ENCODE measurements at regions of chr17 and their contacts with region 1.

Region 1: GRCh38 chr17:59753522-59754467 is 46.3 kb downstream of the VMP1 start:
- DNase-seq: peak; percentile 85
- H3K4me3 Mint-ChIP-seq: peak overlapping the region; percentile 71
- H3K27ac Mint-ChIP-seq: peak overlapping the region; percentile 85
- H3K4me1 Mint-ChIP-seq: peaks cover 58% of the 10 kb centered on the region
- H3K27me3 Mint-ChIP-seq: no peaks in the 10 kb centered on the region

Region 2: DNA sequence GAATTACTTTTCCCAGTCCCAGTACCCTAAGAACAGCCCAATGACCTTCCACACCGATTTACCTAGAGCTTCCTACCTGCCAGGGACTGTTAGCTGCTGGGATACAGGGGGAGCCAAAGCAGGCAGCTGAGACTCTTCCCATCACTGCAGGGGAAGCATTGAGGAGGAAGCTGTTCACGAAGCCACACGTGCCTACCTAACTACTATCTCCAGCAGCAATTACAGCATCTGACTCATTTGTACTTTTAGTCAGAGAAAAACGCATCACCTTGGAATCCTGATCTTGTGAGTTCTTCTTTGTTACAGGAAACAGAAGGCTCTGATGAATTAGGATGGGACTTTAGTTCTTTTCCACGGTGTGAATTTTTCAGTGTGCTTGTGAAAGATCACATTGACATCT is 302.1 kb before region 1 on chr17:
- intact Hi-C with region 1: no loop called
- DNase-seq: no peak
- H3K4me3 Mint-ChIP-seq: no peak overlapping the region
- H3K27ac Mint-ChIP-seq: no peak overlapping the region
- H3K4me1 Mint-ChIP-seq: peaks cover 3% of the 10 kb centered on the region
- H3K27me3 Mint-ChIP-seq: peaks cover 3% of the 10 kb centered on the region

Region 3: DNA sequence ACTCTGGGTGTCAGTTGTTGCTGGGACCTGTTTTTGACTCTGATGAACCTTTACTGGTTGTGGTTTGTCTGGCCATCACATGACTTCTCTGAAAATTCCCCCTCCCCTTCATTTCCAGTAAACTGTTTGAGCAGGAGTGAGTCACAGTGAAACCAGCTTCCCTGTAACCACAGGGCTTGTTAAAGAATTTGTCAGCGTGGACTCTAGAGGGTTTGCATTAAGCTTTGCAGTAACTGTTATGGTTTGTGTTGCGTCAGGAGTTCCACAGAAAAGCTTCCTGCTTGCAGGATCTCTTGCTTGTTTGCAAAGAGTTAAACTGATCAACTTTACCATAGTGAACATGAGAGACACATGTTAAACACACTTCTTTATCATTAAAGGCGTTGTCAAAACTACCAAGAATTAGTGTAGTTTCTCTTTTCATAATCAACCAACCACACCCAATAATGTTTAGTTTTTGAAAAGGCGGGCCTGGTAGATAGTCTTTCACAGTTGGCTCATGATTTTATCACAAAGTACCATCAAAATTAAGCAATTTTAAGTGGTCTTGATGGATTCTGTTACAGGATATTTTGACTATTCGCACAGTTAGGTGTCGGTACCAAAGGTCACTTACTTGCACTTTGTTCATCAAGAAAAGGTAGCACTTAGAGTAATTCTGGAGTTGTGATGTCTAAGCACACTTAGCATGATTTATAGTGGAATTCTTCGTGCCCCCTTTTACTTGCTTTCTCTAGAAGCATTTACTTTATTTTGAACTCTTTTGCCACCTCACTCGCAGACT is 32.9 kb after region 1 on chr17:
- intact Hi-C with region 1: loop called (anchors 1 kb)
- DNase-seq: peak; percentile 96
- H3K4me3 Mint-ChIP-seq: peak overlapping the region; percentile 83
- H3K27ac Mint-ChIP-seq: peak overlapping the region; percentile 100
- H3K4me1 Mint-ChIP-seq: peaks cover 56% of the 10 kb centered on the region
- H3K27me3 Mint-ChIP-seq: no peaks in the 10 kb centered on the region

Region 4: GRCh38 chr17:59815965-59816364 is 62.2 kb after region 1 on chr17:
- intact Hi-C with region 1: no loop called
- DNase-seq: peak; percentile 12
- H3K4me3 Mint-ChIP-seq: no peak overlapping the region
- H3K27ac Mint-ChIP-seq: no peak overlapping the region
- H3K4me1 Mint-ChIP-seq: peaks cover 31% of the 10 kb centered on the region
- H3K27me3 Mint-ChIP-seq: no peaks in the 10 kb centered on the region

Region 5: GRCh38 chr17:59829217-59830006 is 75.6 kb after region 1 on chr17:
- intact Hi-C with region 1: loop called (anchors 1 kb)
- DNase-seq: peak; percentile 89
- H3K4me3 Mint-ChIP-seq: peak overlapping the region; percentile 86
- H3K27ac Mint-ChIP-seq: peak overlapping the region; percentile 97
- H3K4me1 Mint-ChIP-seq: peaks cover 72% of the 10 kb centered on the region
- H3K27me3 Mint-ChIP-seq: no peaks in the 10 kb centered on the region

Region 6: GRCh38 chr17:59837308-59838051 is 83.7 kb after region 1 on chr17:
- intact Hi-C with region 1: loop called (anchors 2 kb)
- DNase-seq: peak; percentile 94
- H3K4me3 Mint-ChIP-seq: peak overlapping the region; percentile 98
- H3K27ac Mint-ChIP-seq: peak overlapping the region; percentile 99
- H3K4me1 Mint-ChIP-seq: peaks cover 32% of the 10 kb centered on the region
- H3K27me3 Mint-ChIP-seq: peaks cover 2% of the 10 kb centered on the region

Region 7: GRCh38 chr17:59846394-59847165 is 92.8 kb after region 1 on chr17:
- intact Hi-C with region 1: loop called (anchors 1 kb)
- DNase-seq: peak; percentile 86
- H3K4me3 Mint-ChIP-seq: peak overlapping the region; percentile 47
- H3K27ac Mint-ChIP-seq: peak overlapping the region; percentile 92
- H3K4me1 Mint-ChIP-seq: peaks cover 53% of the 10 kb centered on the region
- H3K27me3 Mint-ChIP-seq: no peaks in the 10 kb centered on the region

Region 8: DNA sequence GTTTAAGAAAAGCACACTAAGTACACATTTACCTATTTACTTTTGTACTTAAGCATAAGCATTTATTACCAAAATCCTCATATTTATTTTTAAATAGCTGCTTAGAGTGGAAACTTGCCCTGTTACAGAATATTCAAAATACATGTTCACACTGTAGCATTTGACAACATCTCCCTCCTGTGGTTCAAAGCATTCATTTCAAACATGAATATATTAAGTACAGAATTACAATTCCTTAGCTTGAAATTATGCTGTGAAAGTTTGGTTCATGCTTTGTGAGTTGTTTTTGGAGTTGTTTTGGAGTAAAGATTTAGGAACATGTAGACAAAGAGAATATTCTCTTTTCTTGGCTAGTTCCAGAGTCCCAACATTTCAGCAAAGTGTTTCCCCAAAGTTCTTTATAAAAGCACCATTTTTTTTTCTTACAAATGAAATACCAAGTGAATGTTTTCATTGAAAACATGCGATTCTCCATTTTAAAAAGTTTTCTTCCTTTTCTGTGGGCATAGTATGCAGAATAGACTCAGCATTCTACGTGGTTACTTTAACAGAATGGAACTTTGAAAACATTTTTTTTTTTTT is 105.7 kb after region 1 on chr17:
- intact Hi-C with region 1: loop called (anchors 1 kb)
- DNase-seq: peak; percentile 68
- H3K4me3 Mint-ChIP-seq: no peak overlapping the region
- H3K27ac Mint-ChIP-seq: peak overlapping the region; percentile 48
- H3K4me1 Mint-ChIP-seq: peaks cover 18% of the 10 kb centered on the region
- H3K27me3 Mint-ChIP-seq: no peaks in the 10 kb centered on the region

Region 9: DNA sequence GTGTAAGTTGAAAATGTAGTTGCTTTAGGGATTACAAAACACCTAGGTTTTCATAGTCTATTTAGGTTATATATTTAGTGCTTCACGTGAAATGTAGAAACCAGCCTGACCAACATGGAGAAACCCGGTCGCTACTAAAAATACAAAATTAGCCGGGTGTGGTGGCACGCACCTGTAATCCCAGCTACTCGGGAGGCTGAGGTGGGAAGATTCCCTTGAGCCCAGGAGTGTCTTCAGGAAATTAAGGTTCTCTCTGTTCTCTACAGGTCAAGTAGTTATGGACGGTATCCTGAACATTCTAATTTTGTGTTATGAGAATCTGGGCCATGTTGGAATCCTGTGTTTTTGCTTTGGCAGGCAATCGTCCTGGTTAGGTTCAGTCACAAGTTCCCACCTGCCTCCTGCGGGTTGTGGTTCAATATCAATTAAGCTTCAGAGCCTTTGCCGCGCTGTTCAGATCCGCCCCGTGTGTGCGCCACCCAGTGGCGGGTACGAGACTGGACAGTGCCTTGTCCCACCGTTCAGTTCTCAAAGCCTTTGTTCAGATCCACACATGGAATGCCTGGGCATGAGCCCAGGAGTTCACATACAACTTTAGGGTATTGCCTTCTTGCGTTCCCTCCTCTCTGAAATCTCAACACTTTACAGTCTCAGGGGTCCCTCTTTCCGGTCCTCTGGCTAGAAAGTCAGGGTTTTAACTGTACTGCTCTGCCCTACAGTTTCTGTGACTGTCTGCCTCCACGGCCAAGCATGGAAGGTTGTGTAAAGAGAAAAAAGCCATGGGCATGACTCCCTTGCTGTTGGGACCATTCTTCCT is 283.2 kb after region 1 on chr17:
- intact Hi-C with region 1: loop called (anchors 5 kb)
- DNase-seq: peak; percentile 92
- H3K4me3 Mint-ChIP-seq: peak overlapping the region; percentile 48
- H3K27ac Mint-ChIP-seq: peak overlapping the region; percentile 20
- H3K4me1 Mint-ChIP-seq: peaks cover 7% of the 10 kb centered on the region
- H3K27me3 Mint-ChIP-seq: peaks cover 18% of the 10 kb centered on the region

Measured in activated CD4-positive, alpha-beta T cell treated with anti-CD3 and anti-CD28 coated beads, Interleukin-2, amount 10 ng/mL, durations not matched to agents 24 days and 14 days (primary cell).